Common myeloid progenitor, CD34-positive (primary cell): ENCODE measurements at regions of chr3 and their contacts with region 1.

Region 1: GRCh38 chr3:15342945-15343344 is 10.6 kb upstream of the SH3BP5 start:
- DNase-seq: no peak
- H3K4me3 ChIP-seq: no peak overlapping the region
- H3K27ac ChIP-seq: no peak overlapping the region
- H3K4me1 ChIP-seq: peaks cover 0 to 10% (median 6%) of the 10 kb centered on the region in 4 experiments
- H3K27me3 ChIP-seq: peaks cover 0 to 1% (median 0%) of the 10 kb centered on the region in 5 experiments

Region 2: DNA sequence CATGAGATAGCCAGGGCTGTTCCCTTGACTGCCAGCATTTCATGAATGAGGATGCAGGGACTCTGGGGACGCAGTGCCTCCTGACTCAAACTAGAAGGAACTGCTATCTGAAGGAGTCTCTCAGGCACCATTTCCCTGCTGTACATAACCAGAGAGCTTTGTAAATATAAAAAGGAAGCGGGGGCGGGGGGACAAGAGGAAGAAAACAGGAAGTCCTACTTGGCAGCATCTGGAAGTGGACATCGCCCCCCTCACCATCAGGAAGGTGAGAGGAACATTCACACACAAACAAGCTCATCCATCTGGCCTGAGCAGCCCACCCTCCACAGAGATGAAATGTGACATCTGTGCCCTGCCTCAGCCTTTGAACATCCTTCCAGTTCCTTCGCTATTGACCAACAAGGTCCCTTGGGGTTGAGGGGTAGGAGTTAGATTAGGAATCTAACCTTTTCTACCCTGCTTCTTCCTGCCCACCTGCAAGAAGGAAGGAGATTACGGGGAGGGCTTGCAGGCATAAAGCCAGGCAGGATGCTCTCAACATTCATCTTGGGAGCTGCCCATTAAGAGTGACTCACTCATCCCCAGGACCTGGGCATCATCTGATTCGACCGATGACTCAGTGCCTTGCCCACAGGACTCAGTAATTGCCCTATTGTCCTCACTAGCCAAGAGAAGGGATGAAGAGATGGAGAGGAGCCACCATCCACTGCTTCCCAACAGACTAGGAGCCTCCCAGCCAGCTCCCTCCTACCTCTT is 42.4 kb before region 1 on chr3:
- CTCF ChIA-PET with region 1: no interaction called
- POLR2A ChIA-PET with region 1: no interaction called
- DNase-seq: peak in 2 of 3 donors; percentile 41 to 43
- H3K4me3 ChIP-seq: no peak overlapping the region
- H3K27ac ChIP-seq: no peak overlapping the region
- H3K4me1 ChIP-seq: peaks cover 5 to 38% (median 10%) of the 10 kb centered on the region in 4 experiments
- H3K27me3 ChIP-seq: peaks cover 0 to 4% (median 0%) of the 10 kb centered on the region in 5 experiments

Region 3: DNA sequence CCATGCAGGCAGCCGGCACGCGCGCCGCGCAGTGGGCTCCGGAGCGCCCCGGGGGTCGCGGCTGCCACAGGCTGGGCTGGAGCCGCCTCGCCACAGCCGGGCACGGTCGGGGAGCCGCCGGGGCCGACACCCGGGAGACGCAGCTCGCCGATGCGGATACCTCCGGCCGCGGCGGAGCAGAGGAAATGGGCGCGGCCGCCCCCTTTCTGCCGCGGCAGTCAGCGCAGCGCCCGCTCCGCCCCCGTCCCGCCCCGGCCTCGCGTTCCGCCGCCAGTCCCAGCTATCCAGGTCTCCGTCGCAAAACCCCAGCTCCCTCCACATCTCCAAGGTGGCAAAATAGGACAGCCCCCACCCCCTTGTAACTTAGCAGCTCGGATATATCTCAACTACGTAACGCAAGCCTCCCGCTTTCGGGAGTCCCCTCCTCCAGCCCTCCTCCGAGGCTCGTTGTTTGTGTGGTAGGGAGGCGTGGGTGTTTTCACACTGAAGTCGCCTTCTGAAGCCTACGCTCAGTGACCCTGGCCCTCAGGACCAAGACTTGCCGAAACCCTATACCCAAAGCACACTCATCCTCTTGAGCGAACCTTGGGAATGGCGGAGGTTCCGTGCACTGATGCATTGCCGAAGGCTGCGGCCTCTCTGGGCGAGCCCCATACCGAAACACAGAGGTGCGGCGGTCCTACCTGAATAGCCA is 10.4 kb before region 1 on chr3 and contains the start of gene SH3BP5:
- CTCF ChIA-PET with region 1: interaction called, 10 read pairs
- POLR2A ChIA-PET with region 1: no interaction called
- DNase-seq: peak; percentile 50 to 74 (median 70)
- H3K4me3 ChIP-seq: peak within 1 kb of the TSS; percentile 42 to 93 (median 77)
- H3K27ac ChIP-seq: no peak within 1 kb of the TSS
- H3K4me1 ChIP-seq: peaks cover 16 to 60% (median 39%) of the 10 kb centered on the region in 4 experiments
- H3K27me3 ChIP-seq: peaks cover 0 to 11% (median 0%) of the 10 kb centered on the region in 5 experiments

Region 4: DNA sequence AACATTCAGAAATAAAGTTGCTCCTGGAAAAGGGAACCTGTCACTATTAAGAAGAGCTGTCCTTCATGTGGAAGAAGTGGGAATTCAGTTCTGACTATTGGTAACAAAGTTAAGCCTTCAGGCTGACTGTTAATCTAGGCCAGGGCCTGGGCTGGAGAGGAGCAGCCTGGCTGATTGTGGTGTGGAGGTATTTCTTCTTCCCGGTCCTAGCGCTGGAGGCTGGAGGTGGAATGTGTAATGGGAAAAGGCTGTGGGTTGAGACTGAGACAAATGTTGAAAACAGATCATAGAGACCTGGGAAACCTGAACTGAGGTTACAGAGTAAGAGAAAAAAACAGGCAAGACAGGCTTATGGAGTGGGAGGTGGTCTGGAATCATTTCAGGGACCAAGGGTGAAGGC is 13.2 kb after region 1 on chr3:
- CTCF ChIA-PET with region 1: interaction called, 10 read pairs
- POLR2A ChIA-PET with region 1: no interaction called
- DNase-seq: no peak
- H3K4me3 ChIP-seq: no peak overlapping the region
- H3K27ac ChIP-seq: peak overlapping the region in 1 of 2 experiments; percentile 14
- H3K4me1 ChIP-seq: peaks cover 4 to 31% (median 15%) of the 10 kb centered on the region in 4 experiments
- H3K27me3 ChIP-seq: no peaks in the 10 kb centered on the region